ENCODE measurements at regions of chr2 and their contacts with region 1.

Region 1: DNA sequence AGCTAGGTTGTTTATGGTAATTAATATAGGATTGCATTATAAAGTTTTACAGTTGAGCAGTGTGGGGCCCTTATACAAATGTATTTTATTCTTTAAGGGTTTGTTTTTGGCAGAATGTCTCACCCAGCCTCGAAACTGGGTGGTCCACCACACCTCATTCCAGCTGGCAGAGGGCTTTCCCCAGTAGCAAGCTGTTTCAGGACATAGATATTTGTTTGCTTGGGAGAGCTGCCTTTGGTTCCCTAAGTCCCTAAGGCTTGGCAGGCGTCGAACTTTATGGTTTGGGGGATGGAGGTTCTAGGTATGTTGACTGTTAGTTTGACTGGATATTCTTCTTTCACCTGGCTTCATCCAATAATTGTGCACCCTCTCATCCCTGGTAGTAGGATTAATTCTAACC is 205.9 kb downstream of the KCNS3 start:
- DNase-seq: no peak
- H3K4me3 ChIP-seq: no peak overlapping the region
- H3K27ac ChIP-seq: no peak overlapping the region
- H3K4me1 ChIP-seq: no peaks in the 10 kb centered on the region
- H3K27me3 ChIP-seq: no peaks in the 10 kb centered on the region
- CTCF ChIP-seq: no peak

Region 2: DNA sequence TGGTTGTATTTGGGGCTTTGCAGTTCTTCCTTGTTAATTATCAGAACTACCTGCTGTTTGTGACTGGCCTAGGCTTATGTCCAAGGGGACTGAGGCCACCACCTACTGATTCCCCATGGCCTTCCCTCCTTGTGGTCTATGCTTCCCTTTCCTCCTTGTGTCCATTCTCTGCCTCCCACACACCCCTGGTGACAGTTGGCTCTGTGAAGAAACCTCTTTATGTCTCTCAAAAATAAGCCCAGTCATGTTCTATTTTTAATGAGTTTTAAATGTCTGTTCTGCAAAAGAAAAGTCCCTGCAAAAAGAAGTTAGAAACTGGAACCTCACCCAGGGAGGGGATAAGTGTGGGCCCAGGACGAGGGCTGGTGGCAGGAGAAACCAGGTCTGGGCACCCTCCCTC is 435.8 kb before region 1 on chr2:
- CTCF ChIA-PET with region 1: no interaction called
- POLR2A ChIA-PET with region 1: no interaction called
- intact Hi-C with region 1: no loop called
- DNase-seq: no peak
- H3K4me3 ChIP-seq: no peak overlapping the region
- H3K27ac ChIP-seq: no peak overlapping the region
- H3K4me1 ChIP-seq: peaks cover 18% of the 10 kb centered on the region
- H3K27me3 ChIP-seq: no peaks in the 10 kb centered on the region
- CTCF ChIP-seq: no peak

Region 3: GRCh38 chr2:17995593-17995992 is 88.8 kb before region 1 on chr2:
- CTCF ChIA-PET with region 1: no interaction called
- POLR2A ChIA-PET with region 1: no interaction called
- intact Hi-C with region 1: no loop called
- DNase-seq: no peak
- H3K4me3 ChIP-seq: no peak overlapping the region
- H3K27ac ChIP-seq: no peak overlapping the region
- H3K4me1 ChIP-seq: no peaks in the 10 kb centered on the region
- H3K27me3 ChIP-seq: no peaks in the 10 kb centered on the region
- CTCF ChIP-seq: no peak

Region 4: DNA sequence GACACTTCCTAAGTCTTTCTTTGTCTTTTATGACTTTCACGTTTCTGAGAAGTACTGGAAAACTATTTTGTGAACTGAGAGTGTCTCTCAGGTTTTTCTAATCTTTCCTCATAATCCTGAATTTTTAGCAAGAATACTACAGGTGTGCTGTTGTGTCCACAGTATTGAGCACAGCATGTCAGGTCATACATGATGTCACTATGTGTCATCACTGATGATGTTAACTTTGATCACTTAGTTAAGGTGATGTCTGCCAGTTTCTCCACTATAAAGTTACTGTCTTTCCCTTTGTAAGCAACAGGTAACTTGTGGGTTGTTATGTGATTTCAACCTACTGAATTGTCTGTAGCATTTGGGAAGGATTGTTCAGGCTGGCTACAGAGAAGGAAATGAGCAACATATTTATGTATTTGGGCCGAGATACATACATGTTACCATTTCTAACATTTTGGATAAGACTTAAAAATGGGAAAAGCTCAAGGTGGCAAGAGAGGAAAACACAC is 1917.0 kb after region 1 on chr2:
- CTCF ChIA-PET with region 1: no interaction called
- POLR2A ChIA-PET with region 1: interaction called, 11 read pairs
- intact Hi-C with region 1: no loop called
- DNase-seq: no peak
- H3K4me3 ChIP-seq: no peak overlapping the region
- H3K27ac ChIP-seq: no peak overlapping the region
- H3K4me1 ChIP-seq: no peaks in the 10 kb centered on the region
- H3K27me3 ChIP-seq: no peaks in the 10 kb centered on the region
- CTCF ChIP-seq: no peak